ENCODE measurements at regions of chr19 and their contacts with region 1.

Region 1: GRCh38 chr19:43743022-43743421 is 11.7 kb downstream of the SMG9 start:
- DNase-seq: no peak
- ATAC-seq: no peak
- H3K4me3 ChIP-seq: no peak overlapping the region
- H3K4me3 Mint-ChIP-seq: no peak overlapping the region
- H3K27ac ChIP-seq: no peak overlapping the region
- H3K27ac Mint-ChIP-seq: no peak overlapping the region
- H3K4me1 ChIP-seq: peaks cover 4% of the 10 kb centered on the region
- H3K4me1 Mint-ChIP-seq: peaks cover 7 to 12% of the 10 kb centered on the region in 2 donors
- H3K27me3 ChIP-seq: no peaks in the 10 kb centered on the region
- H3K27me3 Mint-ChIP-seq: no peaks in the 10 kb centered on the region
- CTCF ChIP-seq: no peak

Region 2: DNA sequence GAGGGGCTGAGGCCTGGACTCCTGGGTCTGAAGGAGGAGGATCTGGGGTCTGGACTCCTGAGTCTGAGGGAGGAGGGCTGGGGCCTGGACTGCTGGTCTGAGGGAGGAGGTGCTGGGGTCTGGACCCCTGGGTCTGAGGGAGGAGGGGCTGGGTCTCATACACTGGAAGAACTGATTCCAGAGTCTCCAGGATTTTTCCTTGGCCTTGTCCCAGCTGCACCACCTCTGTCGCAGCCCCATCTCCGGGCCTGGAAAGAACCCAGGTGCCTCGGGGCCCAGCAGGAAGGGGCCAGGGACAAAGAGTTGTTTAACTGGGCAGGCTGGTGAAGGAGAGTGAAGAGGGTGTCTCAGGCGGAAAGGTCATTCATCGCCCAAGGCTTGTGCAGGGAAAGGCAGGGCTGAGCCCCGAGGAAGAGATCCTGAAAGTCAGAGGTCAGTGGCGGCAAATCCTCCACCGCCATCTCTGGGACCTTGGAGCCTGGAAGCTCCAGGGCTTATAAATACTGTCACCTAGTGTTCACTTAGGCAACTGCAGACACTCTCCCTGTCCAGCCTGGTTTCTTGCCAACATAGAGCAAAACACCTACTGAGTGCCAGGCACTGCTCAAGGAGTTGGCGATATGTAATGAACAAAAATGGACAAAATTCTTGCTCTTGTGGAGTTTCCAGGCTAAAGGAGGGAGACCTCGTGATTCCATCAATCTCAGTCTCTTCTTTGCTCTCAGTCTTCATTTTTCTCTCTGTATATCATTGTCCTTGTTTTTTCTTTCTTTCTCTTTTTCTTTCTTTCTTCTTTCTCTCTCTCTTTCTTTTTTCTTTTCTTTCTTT is 42.2 kb after region 1 on chr19:
- intact Hi-C with region 1: loop called (anchors 1 kb)
- DNase-seq: peak in 1 of 2 donors; percentile 85
- ATAC-seq: peak; percentile 78 to 90 (median 85)
- H3K4me3 ChIP-seq: no peak overlapping the region
- H3K4me3 Mint-ChIP-seq: no peak overlapping the region
- H3K27ac ChIP-seq: peak overlapping the region; percentile 49
- H3K27ac Mint-ChIP-seq: no peak overlapping the region
- H3K4me1 ChIP-seq: peaks cover 20% of the 10 kb centered on the region
- H3K4me1 Mint-ChIP-seq: peaks cover 0 to 6% of the 10 kb centered on the region in 2 donors
- H3K27me3 ChIP-seq: no peaks in the 10 kb centered on the region
- H3K27me3 Mint-ChIP-seq: peaks cover 23 to 35% of the 10 kb centered on the region in 2 donors
- CTCF ChIP-seq: peak; percentile 92

Region 3: DNA sequence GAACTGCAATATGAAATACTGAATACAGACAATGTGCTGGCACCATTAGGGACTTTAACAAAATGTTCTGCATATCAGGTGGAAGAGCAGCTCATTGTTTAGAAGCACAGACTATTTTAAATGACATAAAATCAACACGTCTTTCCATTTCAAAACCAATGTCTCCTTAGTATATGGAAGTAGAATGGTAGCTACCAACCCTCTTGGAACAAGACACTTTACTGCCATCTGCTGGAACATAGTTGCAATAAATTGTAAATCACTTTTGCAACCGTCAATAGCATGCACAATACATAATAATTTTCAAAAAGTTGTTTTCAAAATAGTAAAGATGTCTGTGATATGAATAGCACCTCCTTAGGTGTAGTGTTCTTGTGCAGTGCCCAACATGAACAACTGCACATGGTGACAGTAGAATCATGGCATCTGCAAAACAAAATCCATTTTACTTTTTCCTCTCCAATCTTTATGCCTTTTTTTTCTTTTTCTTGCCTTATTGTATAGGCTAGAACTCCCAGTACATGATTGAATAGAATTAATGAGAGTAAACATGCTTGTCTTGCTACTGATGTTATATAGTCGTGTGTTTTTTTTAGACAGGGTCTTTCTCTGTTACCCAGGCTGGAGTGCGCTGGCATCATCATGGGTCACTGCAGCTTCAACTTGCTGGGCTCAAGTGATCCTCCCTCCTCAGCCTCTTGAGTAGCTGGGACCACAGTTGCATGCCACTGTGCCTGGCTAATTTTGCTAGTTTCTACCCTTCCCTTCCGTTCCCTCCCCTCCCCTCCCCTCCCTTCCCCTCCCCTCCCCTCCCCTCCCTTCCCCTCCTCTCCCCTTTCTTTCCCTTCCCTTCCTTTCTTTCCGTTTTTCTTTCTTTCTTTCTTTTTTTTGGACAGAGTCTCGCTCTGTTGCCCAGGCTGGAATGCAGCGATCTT is 67.0 kb after region 1 on chr19:
- intact Hi-C with region 1: loop called (anchors 1 kb)
- DNase-seq: peak in 1 of 2 donors; percentile 74
- ATAC-seq: peak; percentile 55 to 61 (median 55)
- H3K4me3 ChIP-seq: no peak overlapping the region
- H3K4me3 Mint-ChIP-seq: no peak overlapping the region
- H3K27ac ChIP-seq: no peak overlapping the region
- H3K27ac Mint-ChIP-seq: no peak overlapping the region
- H3K4me1 ChIP-seq: no peaks in the 10 kb centered on the region
- H3K4me1 Mint-ChIP-seq: no peaks in the 10 kb centered on the region
- H3K27me3 ChIP-seq: peaks cover 2% of the 10 kb centered on the region
- H3K27me3 Mint-ChIP-seq: peaks cover 11 to 20% of the 10 kb centered on the region in 2 donors
- CTCF ChIP-seq: peak; percentile 67